ENCODE measurements at regions of chr6 and their contacts with region 1.

Region 1: DNA sequence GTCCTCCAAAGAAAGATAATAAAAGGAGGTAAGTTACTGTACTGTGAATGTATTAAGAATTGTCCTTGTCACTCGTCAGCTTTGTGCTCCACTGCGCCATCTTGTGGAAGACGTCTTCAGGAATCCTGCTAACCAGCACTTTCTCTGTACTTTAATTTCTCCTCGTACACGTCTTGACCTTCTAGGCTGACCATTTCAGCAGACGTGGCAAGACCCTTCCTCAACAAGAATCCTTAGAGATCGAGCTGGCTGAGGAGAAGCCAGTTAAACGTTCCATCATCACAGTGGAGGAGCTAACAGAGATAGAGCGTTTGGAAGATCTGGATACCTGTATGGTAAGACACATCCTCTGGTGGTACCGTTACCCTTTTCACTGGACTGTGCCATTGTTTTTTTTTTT is 95.5 kb upstream of the SCGN start:
- DNase-seq: peak; percentile 47
- ATAC-seq: peak; percentile 47
- H3K4me3 Mint-ChIP-seq: no peak overlapping the region
- H3K27ac Mint-ChIP-seq: no peak overlapping the region
- H3K4me1 Mint-ChIP-seq: peaks cover 9% of the 10 kb centered on the region
- H3K27me3 Mint-ChIP-seq: no peaks in the 10 kb centered on the region
- CTCF ChIP-seq: peak; percentile 90

Region 2: GRCh38 chr6:25263657-25264056 is 292.9 kb before region 1 on chr6:
- CTCF ChIA-PET with region 1: interaction called, 60 read pairs
- POLR2A ChIA-PET with region 1: no interaction called
- intact Hi-C with region 1: loop called (anchors 1 kb)
- DNase-seq: no peak
- ATAC-seq: no peak
- H3K4me3 Mint-ChIP-seq: no peak overlapping the region
- H3K27ac Mint-ChIP-seq: no peak overlapping the region
- H3K4me1 Mint-ChIP-seq: peaks cover 2% of the 10 kb centered on the region
- H3K27me3 Mint-ChIP-seq: peaks cover 5% of the 10 kb centered on the region
- CTCF ChIP-seq: no peak

Region 3: DNA sequence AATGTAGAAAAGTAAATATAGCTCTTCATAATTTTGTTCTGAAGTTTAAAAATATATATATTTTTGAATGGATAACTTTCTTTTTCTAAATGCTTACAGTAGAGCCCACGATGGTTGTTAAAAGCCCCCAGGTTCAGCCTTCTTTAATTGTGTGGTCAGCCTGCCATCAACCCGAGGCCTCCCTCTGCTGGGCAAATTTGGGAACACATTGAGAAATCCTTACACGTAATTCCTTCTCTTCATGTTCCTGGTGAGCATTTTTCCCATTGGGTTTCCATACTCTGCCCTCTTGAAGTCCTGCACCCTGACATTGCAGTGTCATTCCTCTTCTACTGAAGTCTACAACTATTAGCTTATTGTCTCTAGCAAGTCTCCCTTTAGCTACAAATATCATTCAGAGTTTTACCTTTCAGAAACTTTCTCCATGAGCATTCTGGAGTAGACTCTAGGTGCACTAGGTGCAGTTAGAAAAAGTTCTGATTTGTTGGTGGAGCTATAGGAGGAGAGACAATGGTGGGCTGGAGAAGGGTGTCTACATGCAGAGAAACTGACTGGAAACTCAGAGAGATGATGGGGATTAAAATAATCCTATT is 446.7 kb after region 1 on chr6:
- CTCF ChIA-PET with region 1: no interaction called
- POLR2A ChIA-PET with region 1: no interaction called
- intact Hi-C with region 1: no loop called
- DNase-seq: no peak
- ATAC-seq: peak; percentile 49
- H3K4me3 Mint-ChIP-seq: no peak overlapping the region
- H3K27ac Mint-ChIP-seq: no peak overlapping the region
- H3K4me1 Mint-ChIP-seq: no peaks in the 10 kb centered on the region
- H3K27me3 Mint-ChIP-seq: no peaks in the 10 kb centered on the region
- CTCF ChIP-seq: peak; percentile 39

Measured in activated B cell treated with CpG ODN at 0.5 μM for 24 hours (primary cell).